PC-3 (cell line): ENCODE measurements at regions of chr11 and their contacts with region 1.

Region 1: DNA sequence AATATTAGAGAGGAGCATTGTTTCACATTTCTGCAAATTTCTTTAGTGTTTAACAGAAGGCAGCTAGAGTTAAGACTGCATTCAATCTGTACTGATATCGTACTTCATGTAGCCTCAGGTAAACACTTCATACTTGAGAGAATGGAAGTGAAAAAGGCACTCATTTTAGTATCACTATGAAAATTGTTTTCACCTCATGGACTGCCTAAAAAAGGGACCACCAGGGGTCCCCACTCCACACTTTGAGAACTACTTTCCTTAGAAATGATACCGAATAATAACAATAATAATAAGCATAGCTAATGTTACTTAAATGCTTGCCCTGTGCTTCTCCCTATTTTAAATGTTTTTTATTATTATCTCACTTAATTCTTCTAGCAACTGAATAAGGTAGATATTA is 95.1 kb downstream of the BLID start:
- DNase-seq: peak; percentile 46
- ATAC-seq: peak; percentile 18; the same call in 1 of the 2 replicates
- H3K4me3 ChIP-seq: no peak overlapping the region
- H3K27ac ChIP-seq: no peak overlapping the region
- H3K4me1 ChIP-seq: 0 out of 2 replicates have a peak, but pooled peaks cover 7% of the 10 kb centered on the region
- H3K27me3 ChIP-seq: no peaks in the 10 kb centered on the region
- CTCF ChIP-seq: peak; percentile 70

Region 2: GRCh38 chr11:122004446-122004845 is 16.5 kb before region 1 on chr11:
- CTCF ChIA-PET with region 1: no interaction called
- POLR2A ChIA-PET with region 1: no interaction called
- intact Hi-C with region 1: no loop called
- DNase-seq: no peak
- ATAC-seq: no peak
- H3K4me3 ChIP-seq: no peak overlapping the region
- H3K27ac ChIP-seq: no peak overlapping the region
- H3K4me1 ChIP-seq: no peaks in the 10 kb centered on the region
- H3K27me3 ChIP-seq: no peaks in the 10 kb centered on the region
- CTCF ChIP-seq: no peak

Region 3: GRCh38 chr11:122115524-122116379 is 94.8 kb after region 1 on chr11 and contains the start of gene BLID:
- CTCF ChIA-PET with region 1: no interaction called
- POLR2A ChIA-PET with region 1: no interaction called
- intact Hi-C with region 1: no loop called
- DNase-seq: peak; percentile 66
- ATAC-seq: peak; percentile 60
- H3K4me3 ChIP-seq: no peak within 1 kb of the TSS
- H3K27ac ChIP-seq: no peak within 1 kb of the TSS
- H3K4me1 ChIP-seq: no peaks in the 10 kb centered on the region
- H3K27me3 ChIP-seq: no peaks in the 10 kb centered on the region
- CTCF ChIP-seq: peak; percentile 89
- total RNA-seq, gene BLID: 5.4 and 5.7 TPM in 2 replicates

Region 4: DNA sequence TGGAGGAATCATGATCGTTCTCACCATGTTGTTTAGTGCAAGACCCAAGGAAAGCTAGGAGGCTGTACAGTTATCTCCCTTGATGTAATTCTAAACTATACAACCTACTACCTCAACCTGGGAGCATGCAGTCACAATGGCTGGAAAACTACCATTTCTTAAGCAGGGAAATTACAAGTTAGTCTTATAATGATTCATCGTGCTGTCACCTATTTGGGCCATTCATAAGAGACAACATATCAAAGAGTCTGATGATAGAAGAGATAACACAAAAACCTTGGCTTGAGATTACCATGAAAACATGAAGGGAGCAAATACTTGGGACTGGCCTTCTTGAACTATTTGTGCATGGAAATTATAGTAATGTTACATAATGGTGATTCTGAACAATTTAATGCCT is 125.6 kb after region 1 on chr11:
- CTCF ChIA-PET with region 1: no interaction called
- POLR2A ChIA-PET with region 1: no interaction called
- intact Hi-C with region 1: loop called (anchors 5 kb)
- DNase-seq: peak; percentile 92
- ATAC-seq: peak; percentile 26
- H3K4me3 ChIP-seq: 0 out of 2 replicates have a peak overlapping the region, but pooled peaks have one; percentile 11
- H3K27ac ChIP-seq: peak overlapping the region; percentile 99
- H3K4me1 ChIP-seq: peaks cover 100% of the 10 kb centered on the region
- H3K27me3 ChIP-seq: no peaks in the 10 kb centered on the region
- CTCF ChIP-seq: no peak

Region 5: GRCh38 chr11:122309262-122309925 is 288.5 kb after region 1 on chr11:
- CTCF ChIA-PET with region 1: no interaction called
- POLR2A ChIA-PET with region 1: no interaction called
- intact Hi-C with region 1: loop called (anchors 10 kb)
- DNase-seq: no peak
- ATAC-seq: no peak
- H3K4me3 ChIP-seq: no peak overlapping the region
- H3K27ac ChIP-seq: no peak overlapping the region
- H3K4me1 ChIP-seq: no peaks in the 10 kb centered on the region
- H3K27me3 ChIP-seq: peaks cover 100% of the 10 kb centered on the region
- CTCF ChIP-seq: no peak